ENCODE measurements at regions of chr17 and their contacts with region 1.

Region 1: DNA sequence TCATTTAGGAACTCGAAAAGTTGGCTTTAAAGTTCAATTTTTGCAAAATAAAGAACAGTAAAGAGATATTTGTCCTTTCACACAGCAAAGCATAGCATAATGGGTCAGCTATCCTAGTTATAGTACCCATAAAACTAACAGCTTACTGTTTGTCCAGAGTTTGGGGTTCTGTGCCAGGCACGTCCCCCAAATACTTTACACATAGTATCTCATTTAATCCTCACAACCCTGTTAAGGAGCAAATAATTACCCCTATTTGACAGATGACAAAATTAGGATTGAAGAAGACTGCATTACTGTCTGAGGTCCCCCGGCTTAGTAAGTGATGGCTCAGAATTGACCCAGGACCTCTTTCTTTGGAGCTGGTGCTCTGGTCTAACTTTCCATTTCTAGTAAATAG is 52.6 kb downstream of the MYO1D start:
- DNase-seq: no peak
- ATAC-seq: no peak
- H3K4me3 ChIP-seq: no peak overlapping the region
- H3K4me3 Mint-ChIP-seq: no peak overlapping the region
- H3K27ac ChIP-seq: no peak overlapping the region
- H3K27ac Mint-ChIP-seq: no peak overlapping the region
- H3K4me1 ChIP-seq: no peaks in the 10 kb centered on the region
- H3K4me1 Mint-ChIP-seq: peaks cover 10% of the 10 kb centered on the region
- H3K27me3 ChIP-seq: peaks cover 12 to 15% of the 10 kb centered on the region in 2 experiments
- H3K27me3 Mint-ChIP-seq: peaks cover 46% of the 10 kb centered on the region
- CTCF ChIP-seq: no peak

Region 2: GRCh38 chr17:32813021-32813420 is 11.3 kb before region 1 on chr17:
- CTCF ChIA-PET with region 1: interaction called, 3 read pairs
- POLR2A ChIA-PET with region 1: no interaction called
- intact Hi-C with region 1: loop called in 1 of 2 experiments (anchors 1 kb)
- DNase-seq: no peak
- ATAC-seq: no peak
- H3K4me3 ChIP-seq: no peak overlapping the region
- H3K4me3 Mint-ChIP-seq: no peak overlapping the region
- H3K27ac ChIP-seq: no peak overlapping the region
- H3K27ac Mint-ChIP-seq: no peak overlapping the region
- H3K4me1 ChIP-seq: no peaks in the 10 kb centered on the region
- H3K4me1 Mint-ChIP-seq: peaks cover 5% of the 10 kb centered on the region
- H3K27me3 ChIP-seq: no peaks in the 10 kb centered on the region
- H3K27me3 Mint-ChIP-seq: no peaks in the 10 kb centered on the region
- CTCF ChIP-seq: no peak

Measured in CD4-positive, alpha-beta T cell (primary cell).